Tibial artery (tissue), 4 donors: ENCODE measurements at regions of chr2 and their contacts with region 1.

Region 1: DNA sequence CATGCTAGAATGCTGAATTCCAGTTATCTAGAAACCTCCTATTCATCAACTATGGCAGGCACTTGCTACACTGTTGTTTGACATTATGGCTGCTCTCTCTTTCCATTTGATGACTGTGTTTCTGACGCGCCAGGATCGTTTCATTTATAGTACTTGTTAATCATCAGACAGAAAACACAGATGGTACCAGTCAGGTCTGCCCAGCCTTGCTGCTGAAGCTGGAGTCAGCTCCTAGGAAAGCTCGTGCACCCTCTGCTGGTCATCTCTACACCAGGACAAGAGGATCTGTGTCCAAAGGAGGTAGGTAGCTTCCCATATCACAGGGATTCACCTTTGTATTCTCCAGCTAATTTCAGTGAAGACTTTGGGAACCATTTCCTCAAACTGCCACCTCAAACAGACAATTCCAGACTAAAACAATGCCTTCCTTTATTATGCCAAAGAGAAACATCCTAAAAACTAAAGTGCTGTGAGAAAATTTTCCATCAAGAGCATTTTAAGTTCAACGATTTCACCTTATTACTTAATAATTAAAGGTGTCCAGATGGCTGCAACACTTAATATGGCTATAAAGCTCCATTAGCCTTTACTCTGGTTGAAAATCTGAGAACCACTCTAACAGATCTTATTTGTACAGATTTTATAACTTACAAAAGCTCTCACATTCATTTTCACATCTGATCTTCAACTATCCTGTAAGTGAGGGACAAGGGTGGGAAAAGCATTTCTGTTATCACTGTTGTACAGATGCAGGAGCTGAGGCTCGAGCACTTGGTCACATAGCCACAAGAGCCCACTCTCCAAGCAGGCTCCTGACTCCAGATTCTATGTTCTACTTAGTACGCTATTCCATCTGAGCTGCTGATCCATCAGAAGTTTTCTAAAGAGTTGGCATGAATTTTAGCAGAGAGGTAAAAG is 17.5 kb downstream of the METTL8 start:
- DNase-seq: peak; percentile 88
- H3K4me3 ChIP-seq: no peak overlapping the region
- H3K27ac ChIP-seq: no peak overlapping the region
- H3K4me1 ChIP-seq: peaks cover 0 to 11% (median 0%) of the 10 kb centered on the region in 4 donors
- H3K27me3 ChIP-seq: no peaks in the 10 kb centered on the region
- CTCF ChIP-seq: peak; percentile 75

Region 2: DNA sequence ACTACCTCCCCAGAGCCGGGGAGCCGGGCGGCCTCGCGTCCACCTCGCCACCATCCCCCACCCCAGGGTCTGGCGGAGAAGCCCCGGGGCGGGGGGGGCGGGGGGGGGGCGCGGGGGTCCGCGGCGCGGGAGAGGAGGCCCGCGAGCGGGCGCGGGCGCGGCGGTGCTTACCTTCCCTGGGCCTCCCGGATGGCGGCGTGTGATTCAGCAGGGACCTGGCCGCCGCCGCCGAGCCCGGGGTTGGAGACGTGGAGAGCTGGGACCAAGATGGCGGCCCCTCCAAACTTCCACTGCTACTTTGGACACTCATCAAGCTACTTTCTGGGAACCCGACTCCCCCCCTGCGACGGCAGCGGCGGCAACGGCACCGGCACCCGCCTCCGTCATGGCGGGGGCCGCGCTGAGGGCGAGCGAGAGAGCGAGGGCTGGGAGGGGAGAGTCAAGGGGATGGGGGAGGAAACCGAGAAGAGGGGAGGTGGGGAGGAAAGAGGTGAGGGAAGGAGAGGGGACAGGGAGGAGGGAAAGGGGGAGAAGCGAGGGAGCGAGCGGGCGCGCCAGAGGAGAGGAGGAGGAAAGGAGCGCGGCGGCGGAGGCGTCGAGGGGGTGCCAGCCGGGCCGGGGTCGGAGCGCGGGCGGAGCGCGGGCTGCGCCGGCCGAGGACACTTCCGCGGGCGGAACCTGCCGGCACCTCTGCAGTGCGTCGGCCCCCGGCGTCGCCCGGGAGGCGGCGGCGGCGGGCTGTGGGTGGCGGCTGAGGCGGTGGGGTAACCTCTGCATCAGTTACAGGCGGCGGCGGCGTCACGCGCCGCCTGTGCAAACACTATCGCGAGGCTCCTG is 255.9 kb before region 1 on chr2 and contains the start of gene TLK1:
- intact Hi-C with region 1: loop called (anchors 5 kb)
- DNase-seq: peak; percentile 59 to 83
- H3K4me3 ChIP-seq: peak within 1 kb of the TSS; percentile 96 to 98
- H3K27ac ChIP-seq: peak within 1 kb of the TSS; percentile 98 to 100
- H3K4me1 ChIP-seq: peaks cover 0 to 21% (median 9%) of the 10 kb centered on the region in 4 donors
- H3K27me3 ChIP-seq: no peaks in the 10 kb centered on the region
- CTCF ChIP-seq: no peak

Region 3: DNA sequence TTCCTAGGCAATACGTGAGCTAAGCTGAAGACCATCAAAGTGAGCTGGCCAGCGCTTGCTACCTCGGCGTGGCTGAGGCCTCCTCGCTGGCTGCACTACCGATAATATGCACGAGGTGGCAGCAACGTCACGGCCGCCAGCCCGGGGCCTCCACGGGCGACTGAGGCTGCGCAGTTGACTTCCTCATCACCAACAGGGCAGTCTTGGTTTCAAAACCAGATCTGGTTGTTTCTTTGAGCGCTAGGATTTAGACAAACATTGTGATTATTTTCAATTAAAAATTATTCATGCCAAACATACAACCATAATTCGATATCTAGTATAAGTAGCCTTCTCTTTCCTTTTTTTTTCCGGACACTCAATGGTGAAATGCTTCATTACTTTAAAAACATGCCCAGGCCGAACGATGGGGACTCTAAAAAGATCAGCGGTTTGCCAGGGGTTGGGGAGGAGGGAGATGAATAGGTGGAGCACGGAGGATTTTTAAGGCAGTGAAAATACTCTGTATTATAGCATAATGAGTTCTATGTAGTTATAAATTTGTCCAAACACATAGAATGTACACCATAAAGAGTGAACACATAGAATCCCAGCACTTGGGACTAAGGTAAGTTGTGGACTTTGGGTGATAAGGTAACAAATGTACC is 158.0 kb after region 1 on chr2:
- intact Hi-C with region 1: no loop called
- DNase-seq: peak; percentile 69 to 86
- H3K4me3 ChIP-seq: no peak overlapping the region
- H3K27ac ChIP-seq: no peak overlapping the region
- H3K4me1 ChIP-seq: no peaks in the 10 kb centered on the region
- H3K27me3 ChIP-seq: peaks cover 0 to 4% of the 10 kb centered on the region in 2 donors
- CTCF ChIP-seq: peak; percentile 87 to 98

Region 4: DNA sequence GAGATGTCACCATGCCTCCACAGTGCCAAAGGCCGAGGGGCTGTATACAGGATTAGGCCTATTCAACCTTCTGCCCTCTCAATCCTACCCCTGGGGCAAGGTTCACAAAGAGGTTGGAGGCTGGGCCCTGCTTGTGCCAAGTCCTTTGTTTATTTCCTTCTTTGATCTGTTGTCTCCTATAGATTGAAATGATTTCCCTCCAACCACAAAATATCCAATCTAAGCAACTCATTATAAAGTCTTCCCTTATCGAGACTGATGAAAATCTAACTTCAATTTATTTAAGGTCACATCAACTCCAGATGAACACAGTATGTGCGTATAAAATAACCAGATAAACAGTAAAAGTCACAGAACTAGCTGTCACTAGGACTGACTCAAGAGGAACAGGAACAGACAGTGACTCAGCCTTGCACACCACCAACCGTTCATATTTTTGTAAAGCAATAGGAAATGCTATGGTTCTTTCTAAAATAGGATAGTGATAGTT is 382.0 kb after region 1 on chr2:
- intact Hi-C with region 1: no loop called
- DNase-seq: no peak
- H3K4me3 ChIP-seq: no peak overlapping the region
- H3K27ac ChIP-seq: no peak overlapping the region
- H3K4me1 ChIP-seq: no peaks in the 10 kb centered on the region
- H3K27me3 ChIP-seq: no peaks in the 10 kb centered on the region
- CTCF ChIP-seq: no peak